ENCODE measurements at regions of chr13 and their contacts with region 1.

Region 1: DNA sequence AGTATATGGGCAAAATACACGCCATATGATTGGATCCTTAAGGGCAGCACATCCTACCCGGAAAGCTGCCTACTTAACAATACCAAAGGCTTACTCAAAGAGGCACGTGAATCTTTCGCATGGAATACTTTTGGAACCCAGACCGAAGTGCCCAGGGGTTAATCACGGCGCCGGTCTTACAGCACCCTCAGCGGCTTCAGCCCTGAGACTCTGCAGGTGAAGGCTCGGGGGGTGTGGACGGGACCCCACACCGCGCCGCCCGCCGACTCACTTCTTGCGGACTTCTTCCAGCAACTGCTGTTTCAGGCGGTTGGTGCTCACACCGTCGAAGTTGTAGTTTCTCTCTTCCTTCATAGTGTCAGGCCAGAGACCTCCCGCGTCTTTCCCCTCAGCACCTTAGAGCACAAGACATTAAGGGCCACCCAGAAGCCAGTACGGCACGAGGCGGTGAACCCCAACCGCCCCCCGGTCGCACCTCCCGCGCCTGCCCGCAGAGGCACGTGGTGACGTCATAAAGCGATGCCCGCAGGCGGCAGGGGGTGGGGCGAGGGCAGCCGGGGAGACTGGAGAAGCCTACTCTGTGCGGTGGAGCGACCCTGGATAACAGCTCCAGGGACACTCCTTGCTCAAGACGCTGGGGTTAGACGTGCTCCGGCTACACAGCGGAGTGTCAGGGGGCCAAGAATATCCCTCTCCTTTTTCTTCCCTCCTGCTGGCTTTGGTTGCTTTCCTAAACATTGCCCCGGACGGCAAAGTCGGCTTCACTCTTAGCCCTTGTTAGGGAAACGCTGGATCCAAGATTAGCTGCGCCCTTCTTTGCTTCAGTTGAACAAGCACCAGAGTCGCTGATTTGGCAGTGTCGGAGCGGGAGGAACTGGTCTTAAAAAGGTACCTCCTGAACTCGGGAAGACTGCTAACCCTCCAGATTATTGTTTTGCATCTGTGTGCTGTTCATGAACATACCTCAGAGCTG is at the start of gene CCDC169:
- DNase-seq: peak; percentile 73
- H3K4me3 ChIP-seq: peak within 1 kb of the TSS; percentile 65 to 69
- H3K27ac ChIP-seq: no peak within 1 kb of the TSS
- H3K4me1 ChIP-seq: peaks cover 0 to 6% of the 10 kb centered on the region in 2 experiments; a peak in 1 of 4 replicates
- H3K27me3 ChIP-seq: no peaks in the 10 kb centered on the region
- CTCF ChIP-seq: no peak
- EP300 ChIP-seq: no peak
- RAD21 ChIP-seq: no peak
- polyA plus RNA-seq, gene CCDC169: 1.8 and 3.1 TPM in 2 replicates

Region 2: GRCh38 chr13:36282818-36283445 is 14.7 kb before region 1 on chr13:
- CTCF ChIA-PET with region 1: interaction called, 43 read pairs
- POLR2A ChIA-PET with region 1: no interaction called
- DNase-seq: peak; percentile 44
- H3K4me3 ChIP-seq: no peak overlapping the region; a peak in 1 of 4 replicates
- H3K27ac ChIP-seq: no peak overlapping the region
- H3K4me1 ChIP-seq: no peaks in the 10 kb centered on the region; a peak in 1 of 4 replicates
- H3K27me3 ChIP-seq: no peaks in the 10 kb centered on the region
- CTCF ChIP-seq: peak; percentile 92
- EP300 ChIP-seq: no peak
- RAD21 ChIP-seq: peak; percentile 88

Region 3: GRCh38 chr13:36509367-36509766 is 211.7 kb after region 1 on chr13:
- CTCF ChIA-PET with region 1: no interaction called
- POLR2A ChIA-PET with region 1: no interaction called
- DNase-seq: no peak
- H3K4me3 ChIP-seq: no peak overlapping the region
- H3K27ac ChIP-seq: no peak overlapping the region
- H3K4me1 ChIP-seq: no peaks in the 10 kb centered on the region; a peak in 1 of 4 replicates
- H3K27me3 ChIP-seq: no peaks in the 10 kb centered on the region
- CTCF ChIP-seq: no peak
- EP300 ChIP-seq: no peak
- RAD21 ChIP-seq: no peak

Region 4: GRCh38 chr13:37225414-37226070 is 927.9 kb after region 1 on chr13:
- CTCF ChIA-PET with region 1: no interaction called
- POLR2A ChIA-PET with region 1: no interaction called
- DNase-seq: no peak
- H3K4me3 ChIP-seq: no peak overlapping the region; a peak in 1 of 4 replicates
- H3K27ac ChIP-seq: peak overlapping the region in 1 of 2 experiments; percentile 87; a peak in 2 of 4 replicates
- H3K4me1 ChIP-seq: no peaks in the 10 kb centered on the region
- H3K27me3 ChIP-seq: no peaks in the 10 kb centered on the region
- CTCF ChIP-seq: no peak
- EP300 ChIP-seq: no peak
- RAD21 ChIP-seq: no peak